Activated CD4-positive, alpha-beta memory T cell treated with anti-CD3 and anti-CD28 coated beads, Interleukin-2, amount 10 ng/mL, durations not matched to agents 7 days and 5 days (primary cell): ENCODE measurements at regions of chr1 and their contacts with region 1.

Region 1: GRCh38 chr1:84573967-84574842 is at the start of gene CTBS:
- DNase-seq: peak; percentile 86
- H3K4me3 Mint-ChIP-seq: peak within 1 kb of the TSS; percentile 97
- H3K27ac Mint-ChIP-seq: peak within 1 kb of the TSS; percentile 100
- H3K4me1 Mint-ChIP-seq: peaks cover 39% of the 10 kb centered on the region
- H3K27me3 Mint-ChIP-seq: no peaks in the 10 kb centered on the region
- total RNA-seq, gene CTBS: 27.2 to 28.1 TPM

Region 2: DNA sequence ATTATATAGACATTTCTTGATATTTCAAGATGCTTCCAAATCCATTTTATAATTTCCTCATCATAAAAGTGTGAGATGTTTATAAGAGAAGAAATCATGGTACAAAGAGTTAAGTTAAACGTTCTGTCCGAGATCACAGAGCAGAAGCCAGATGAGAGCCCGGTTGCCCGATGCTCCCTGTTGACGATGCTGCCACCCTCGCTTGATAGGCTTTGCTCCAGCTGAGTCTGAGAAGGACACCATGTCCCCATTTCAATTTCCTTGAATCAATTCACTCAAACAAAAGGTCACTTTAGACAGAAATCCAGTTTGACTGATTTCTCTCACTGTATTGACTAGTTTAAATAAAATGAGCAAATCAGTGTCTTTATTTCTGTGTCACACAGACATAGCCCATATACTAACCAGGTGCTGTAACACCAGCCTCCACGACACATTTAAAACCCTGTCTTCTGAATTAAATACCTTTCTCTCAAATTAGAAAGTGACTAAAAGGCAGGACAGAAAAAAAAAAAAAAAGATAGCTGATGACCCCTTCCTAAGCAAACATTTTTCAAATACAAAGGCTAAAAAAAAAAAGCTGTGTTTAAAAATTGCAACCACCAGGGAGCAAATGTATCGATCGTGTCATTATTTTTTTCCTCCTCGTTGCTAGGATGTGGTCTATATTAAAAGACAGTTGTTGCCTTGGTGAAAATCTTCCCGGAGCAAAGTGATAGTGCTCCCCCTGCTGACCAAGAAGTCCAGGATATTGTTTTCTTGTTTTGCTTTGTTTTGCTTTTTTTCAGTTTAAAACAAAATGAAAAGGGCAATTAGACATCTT is 140.7 kb before region 1 on chr1:
- CTCF ChIA-PET with region 1: interaction called, 5 read pairs
- POLR2A ChIA-PET with region 1: interaction called, 10 read pairs
- DNase-seq: peak; percentile 60
- H3K4me3 Mint-ChIP-seq: peak overlapping the region; percentile 47
- H3K27ac Mint-ChIP-seq: peak overlapping the region; percentile 1
- H3K4me1 Mint-ChIP-seq: peaks cover 10% of the 10 kb centered on the region
- H3K27me3 Mint-ChIP-seq: no peaks in the 10 kb centered on the region

Region 3: DNA sequence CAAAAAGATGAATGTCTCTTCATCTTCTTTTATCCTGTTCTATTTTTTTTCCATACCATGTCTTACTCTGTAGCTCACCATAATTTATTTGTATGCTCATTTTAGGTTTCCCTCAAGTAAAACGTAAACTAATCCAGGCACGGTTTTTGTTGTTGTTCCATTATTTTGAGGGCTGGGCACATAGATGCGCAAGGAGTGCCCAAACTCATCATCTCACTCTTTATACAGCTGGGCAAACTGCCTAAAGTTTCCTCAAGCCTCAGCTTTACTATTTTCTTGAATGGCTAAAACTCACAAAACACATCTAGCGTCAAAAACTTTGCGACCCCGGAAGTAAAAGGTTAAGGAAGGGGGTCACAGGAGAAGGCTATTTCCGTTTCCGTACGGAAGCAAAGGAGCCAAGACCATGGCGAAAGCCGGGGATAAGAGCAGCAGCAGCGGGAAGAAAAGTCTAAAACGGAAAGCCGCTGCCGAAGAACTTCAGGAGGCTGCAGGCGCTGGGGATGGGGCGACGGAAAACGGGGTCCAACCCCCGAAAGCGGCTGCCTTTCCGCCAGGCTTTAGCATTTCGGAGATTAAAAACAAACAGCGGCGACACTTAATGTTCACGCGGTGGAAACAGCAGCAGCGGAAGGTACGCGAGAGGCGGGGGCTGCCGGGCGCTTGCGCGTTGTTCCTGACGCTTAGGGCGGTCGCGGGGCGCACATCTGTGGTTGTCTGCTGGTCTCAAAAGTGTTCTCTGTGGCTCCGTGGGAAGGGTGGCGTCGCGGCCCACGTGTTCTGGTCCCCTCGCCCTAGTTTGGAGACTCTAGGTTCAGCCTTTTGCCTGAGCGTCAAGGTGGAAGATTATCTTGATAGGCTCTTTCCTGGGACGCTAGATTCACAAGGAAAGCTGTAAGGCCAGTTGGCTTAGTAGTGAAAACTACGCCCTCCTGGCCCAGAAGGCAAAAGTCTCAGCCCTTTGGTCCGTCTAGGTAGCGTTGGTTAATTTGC is 95.0 kb before region 1 on chr1 and contains the start of gene RPF1:
- CTCF ChIA-PET with region 1: interaction called, 5 read pairs
- POLR2A ChIA-PET with region 1: interaction called, 89 read pairs
- DNase-seq: peak; percentile 81
- H3K4me3 Mint-ChIP-seq: peak within 1 kb of the TSS; percentile 96
- H3K27ac Mint-ChIP-seq: peak within 1 kb of the TSS; percentile 95
- H3K4me1 Mint-ChIP-seq: peaks cover 34% of the 10 kb centered on the region
- H3K27me3 Mint-ChIP-seq: peaks cover 22% of the 10 kb centered on the region
- total RNA-seq, gene RPF1: 37.8 to 39.7 TPM

Region 4: GRCh38 chr1:84506002-84506728 is 68.0 kb before region 1 on chr1 and contains the starts of genes GNG5 and SPATA1:
- CTCF ChIA-PET with region 1: interaction called, 27 read pairs
- POLR2A ChIA-PET with region 1: interaction called, 209 read pairs
- DNase-seq: peak; percentile 98
- H3K4me3 Mint-ChIP-seq: peak within 1 kb of the TSS; percentile 95
- H3K27ac Mint-ChIP-seq: peak within 1 kb of the TSS; percentile 97
- H3K4me1 Mint-ChIP-seq: peaks cover 43% of the 10 kb centered on the region
- H3K27me3 Mint-ChIP-seq: no peaks in the 10 kb centered on the region
- total RNA-seq, gene GNG5: 122 to 127 TPM
- total RNA-seq, gene SPATA1: 4.0 to 4.7 TPM

Region 5: GRCh38 chr1:84620720-84621313 is 46.6 kb after region 1 on chr1:
- CTCF ChIA-PET with region 1: interaction called, 9 read pairs
- POLR2A ChIA-PET with region 1: interaction called, 20 read pairs
- DNase-seq: peak; percentile 85
- H3K4me3 Mint-ChIP-seq: peak overlapping the region; percentile 83
- H3K27ac Mint-ChIP-seq: peak overlapping the region; percentile 69
- H3K4me1 Mint-ChIP-seq: peaks cover 19% of the 10 kb centered on the region
- H3K27me3 Mint-ChIP-seq: no peaks in the 10 kb centered on the region

Region 6: DNA sequence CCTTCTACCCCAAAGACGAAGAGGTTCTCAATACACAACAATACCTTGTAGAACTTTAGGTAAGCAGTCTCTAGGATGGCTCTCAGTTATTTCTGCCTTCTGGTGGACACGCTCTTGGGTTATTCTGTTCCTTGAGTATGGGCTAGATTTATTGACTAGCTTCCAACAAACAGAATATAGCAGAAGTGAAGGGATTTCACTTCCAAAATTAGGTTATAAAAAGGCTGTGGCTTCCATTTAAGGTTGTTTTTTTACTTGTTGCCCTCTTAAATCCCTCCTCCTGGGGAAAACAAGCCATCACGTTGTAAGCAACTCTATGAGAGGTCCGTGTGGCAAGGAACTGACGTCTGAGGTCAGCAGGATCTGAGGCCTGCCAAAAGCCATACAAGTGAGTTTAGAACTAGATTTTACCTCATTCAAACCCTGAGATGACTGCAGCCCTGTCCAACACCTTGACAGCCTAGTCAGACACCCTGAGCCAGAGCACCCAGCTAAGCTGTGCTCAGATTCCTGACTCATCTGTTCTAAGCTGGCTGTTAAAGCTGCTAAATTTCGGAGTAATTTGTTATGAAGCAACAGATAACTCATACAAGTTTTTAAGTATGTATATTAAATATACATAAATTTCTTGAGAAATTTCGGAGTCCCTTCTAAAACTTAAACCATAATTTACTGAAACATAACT is 103.4 kb after region 1 on chr1:
- CTCF ChIA-PET with region 1: no interaction called
- POLR2A ChIA-PET with region 1: no interaction called
- DNase-seq: no peak
- H3K4me3 Mint-ChIP-seq: no peak overlapping the region
- H3K27ac Mint-ChIP-seq: no peak overlapping the region
- H3K4me1 Mint-ChIP-seq: peaks cover 6% of the 10 kb centered on the region
- H3K27me3 Mint-ChIP-seq: no peaks in the 10 kb centered on the region

Region 7: DNA sequence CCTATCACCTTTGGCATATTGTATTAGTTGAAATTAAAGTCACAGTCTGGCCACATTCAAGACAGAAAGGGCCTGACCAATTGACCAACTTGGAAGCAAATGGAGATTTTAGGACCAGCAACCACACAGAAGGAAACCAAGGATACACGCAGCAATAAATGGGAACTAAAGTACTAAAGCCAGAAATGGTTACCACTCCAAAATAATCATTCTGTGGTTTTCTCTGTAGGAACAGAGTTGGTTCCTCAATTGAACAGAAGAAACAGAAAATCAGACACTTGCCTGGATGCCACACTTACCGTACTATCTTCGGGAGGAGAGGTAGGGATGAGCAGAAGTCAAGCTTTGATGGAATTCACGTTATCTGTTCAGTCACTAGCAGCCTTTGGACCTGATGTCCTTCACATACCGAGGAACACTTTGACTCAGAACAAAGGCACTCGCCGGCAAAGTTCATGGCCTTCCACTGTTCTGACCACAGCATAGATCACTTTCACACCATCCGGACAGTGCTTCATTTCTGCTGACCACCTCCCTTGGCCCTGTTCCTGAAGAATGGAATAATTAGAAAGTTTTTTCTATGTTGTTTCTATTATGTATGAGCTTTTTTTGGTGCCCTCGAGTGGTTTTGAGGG is 221.9 kb after region 1 on chr1:
- CTCF ChIA-PET with region 1: no interaction called
- POLR2A ChIA-PET with region 1: no interaction called
- DNase-seq: no peak
- H3K4me3 Mint-ChIP-seq: no peak overlapping the region
- H3K27ac Mint-ChIP-seq: no peak overlapping the region
- H3K4me1 Mint-ChIP-seq: no peaks in the 10 kb centered on the region
- H3K27me3 Mint-ChIP-seq: peaks cover 6% of the 10 kb centered on the region

Region 8: DNA sequence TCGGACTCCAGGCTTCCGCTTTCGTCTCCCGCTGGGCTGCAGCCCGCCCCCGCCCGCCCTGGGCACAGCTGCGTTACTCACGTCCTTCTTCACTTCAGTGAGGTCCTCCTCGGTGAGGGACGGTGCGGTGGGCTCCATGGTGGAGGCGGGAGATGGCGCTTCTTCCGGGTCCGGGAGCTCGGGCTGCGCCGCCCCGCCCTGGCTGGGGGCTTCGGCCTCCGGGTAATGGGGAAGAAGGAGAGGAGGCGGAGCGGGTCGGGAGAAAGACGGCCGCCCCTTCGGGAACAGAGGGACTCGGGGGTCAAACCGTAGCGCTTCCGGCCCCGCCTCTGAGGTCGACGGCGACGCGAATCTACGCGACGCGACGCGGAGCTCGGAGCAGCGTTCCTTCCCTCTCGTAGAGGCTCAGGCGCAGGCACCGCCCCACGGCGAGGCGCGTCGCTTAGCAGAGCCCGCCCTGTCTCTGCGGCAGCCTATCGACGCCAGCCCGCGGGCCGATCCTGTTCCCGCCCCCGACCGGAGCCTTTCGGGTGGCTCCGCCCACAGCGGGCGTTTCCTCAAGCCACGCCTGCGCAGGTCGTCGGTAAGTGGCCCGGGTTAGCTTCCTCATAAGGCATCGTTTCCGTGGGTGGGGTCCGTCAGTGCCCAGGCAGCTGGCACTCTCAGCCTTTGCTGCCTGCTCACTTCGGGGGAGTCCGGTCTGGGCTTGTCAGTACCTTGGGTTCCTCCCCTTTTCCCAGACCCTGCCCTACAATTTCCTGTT is 702.2 kb after region 1 on chr1 and contains the start of gene BCL10:
- CTCF ChIA-PET with region 1: no interaction called
- POLR2A ChIA-PET with region 1: interaction called, 22 read pairs
- DNase-seq: peak; percentile 99
- H3K4me3 Mint-ChIP-seq: peak within 1 kb of the TSS; percentile 80
- H3K27ac Mint-ChIP-seq: peak within 1 kb of the TSS; percentile 80
- H3K4me1 Mint-ChIP-seq: peaks cover 53% of the 10 kb centered on the region
- H3K27me3 Mint-ChIP-seq: peaks cover 26% of the 10 kb centered on the region
- total RNA-seq, gene BCL10: 24.3 to 30.1 TPM